T-cell (primary cell): ENCODE measurements at regions of chr9 and their contacts with region 1.

Region 1: GRCh38 chr9:21611896-21612295 is 129.8 kb upstream of the IFNE start:
- DNase-seq: peak in 24 of 35 experiments; percentile 1 to 42 (median 16)
- ATAC-seq: peak; percentile 72 to 95 (median 92)
- H3K4me3 ChIP-seq: no peak overlapping the region
- H3K4me3 Mint-ChIP-seq: peak overlapping the region; percentile 22 to 40 (median 39)
- H3K27ac ChIP-seq: no peak overlapping the region
- H3K27ac Mint-ChIP-seq: peak overlapping the region; percentile 70 to 81
- H3K4me1 ChIP-seq: peaks cover 23 to 34% of the 10 kb centered on the region in 2 experiments
- H3K4me1 Mint-ChIP-seq: peaks cover 50 to 63% (median 59%) of the 10 kb centered on the region in 3 donors
- H3K27me3 ChIP-seq: no peaks in the 10 kb centered on the region
- H3K27me3 Mint-ChIP-seq: no peaks in the 10 kb centered on the region

Region 2: DNA sequence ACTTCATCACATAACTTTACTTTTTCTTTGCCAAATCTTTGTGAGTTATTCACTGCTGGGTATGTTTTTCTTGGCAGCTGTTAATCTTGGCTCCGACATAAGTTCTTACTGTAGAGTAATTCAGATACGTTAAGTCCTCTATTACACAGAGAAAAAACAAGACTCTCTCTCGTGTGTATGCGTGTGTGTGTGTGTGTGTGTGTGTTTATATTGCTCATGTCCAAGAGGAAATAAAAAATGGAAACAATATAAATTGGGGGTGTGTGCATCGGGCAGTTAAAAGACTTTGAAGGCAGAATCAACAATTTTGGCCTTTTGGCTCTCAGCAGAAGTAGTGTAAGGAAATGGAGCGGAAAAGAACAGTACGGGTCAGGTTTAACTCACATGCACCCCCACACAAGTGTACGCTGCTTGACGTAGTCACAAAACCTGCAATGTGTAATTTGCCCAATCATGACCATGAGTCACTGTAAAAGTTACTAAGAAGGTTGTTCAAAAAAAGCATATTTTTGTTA is 62.6 kb before region 1 on chr9:
- CTCF ChIA-PET with region 1: no interaction called
- POLR2A ChIA-PET with region 1: no interaction called
- DNase-seq: no peak
- ATAC-seq: no peak
- H3K4me3 ChIP-seq: no peak overlapping the region
- H3K4me3 Mint-ChIP-seq: no peak overlapping the region
- H3K27ac ChIP-seq: no peak overlapping the region
- H3K27ac Mint-ChIP-seq: no peak overlapping the region
- H3K4me1 ChIP-seq: no peaks in the 10 kb centered on the region
- H3K4me1 Mint-ChIP-seq: peaks cover 8 to 18% (median 12%) of the 10 kb centered on the region in 3 donors
- H3K27me3 ChIP-seq: no peaks in the 10 kb centered on the region
- H3K27me3 Mint-ChIP-seq: peaks cover 3 to 12% of the 10 kb centered on the region in 2 donors

Region 3: DNA sequence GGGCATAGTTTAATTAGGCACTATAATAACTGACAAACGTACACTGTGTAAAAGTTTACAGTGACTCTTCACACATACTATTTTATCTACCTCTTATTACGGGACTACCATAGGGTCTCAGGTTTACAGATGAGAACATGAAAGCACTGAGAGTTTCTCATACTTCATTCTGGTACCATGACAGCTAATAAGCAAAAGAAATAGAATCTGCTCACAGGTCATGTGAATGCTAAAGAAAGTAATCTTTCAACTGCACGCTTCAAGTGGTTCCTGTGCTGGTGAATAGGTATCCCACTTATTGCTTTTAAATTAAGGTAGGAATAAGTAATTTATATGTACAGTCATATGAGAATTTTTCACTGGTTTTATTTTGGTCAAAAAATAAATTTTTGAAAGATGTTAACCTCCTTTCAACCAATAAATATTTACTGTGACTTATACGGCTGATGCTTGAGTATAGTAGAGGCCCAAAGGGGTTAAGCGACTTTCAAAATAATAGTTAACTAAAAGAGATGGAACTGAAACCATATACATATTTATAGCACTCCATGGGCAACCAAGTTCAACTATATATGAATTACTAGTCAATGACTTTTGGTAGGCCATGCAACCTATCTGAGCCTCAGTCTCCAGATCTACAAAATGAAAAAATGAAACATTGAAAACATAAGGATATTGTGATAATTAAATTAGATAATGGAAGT is 374.2 kb after region 1 on chr9:
- CTCF ChIA-PET with region 1: no interaction called
- POLR2A ChIA-PET with region 1: no interaction called
- DNase-seq: no peak
- ATAC-seq: no peak
- H3K4me3 ChIP-seq: no peak overlapping the region
- H3K4me3 Mint-ChIP-seq: no peak overlapping the region
- H3K27ac ChIP-seq: no peak overlapping the region
- H3K27ac Mint-ChIP-seq: no peak overlapping the region
- H3K4me1 ChIP-seq: peaks cover 0 to 2% of the 10 kb centered on the region in 2 experiments
- H3K4me1 Mint-ChIP-seq: peaks cover 0 to 7% (median 6%) of the 10 kb centered on the region in 3 donors
- H3K27me3 ChIP-seq: peaks cover 11 to 24% of the 10 kb centered on the region in 2 experiments
- H3K27me3 Mint-ChIP-seq: peaks cover 56 to 72% of the 10 kb centered on the region in 2 donors

Region 4: DNA sequence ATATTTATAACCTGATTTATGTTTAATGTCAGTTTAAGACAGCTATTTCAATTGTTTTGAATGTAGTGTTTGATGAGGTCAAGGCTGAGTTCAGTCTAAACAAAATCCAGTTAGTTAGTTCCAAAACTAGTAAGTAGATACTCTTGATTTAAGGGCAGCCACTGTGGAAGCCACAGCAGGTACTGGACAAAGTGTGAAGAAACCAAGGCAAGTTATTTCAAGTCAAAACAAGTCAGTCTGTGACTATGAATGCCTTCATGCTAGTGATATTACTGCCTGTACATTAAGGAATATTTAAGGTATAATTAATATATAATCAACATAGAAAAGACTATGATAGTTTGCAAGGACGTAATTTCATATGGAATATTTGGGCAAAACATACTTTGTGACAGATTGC is 1197.0 kb after region 1 on chr9:
- CTCF ChIA-PET with region 1: interaction called in 1 of 2 experiments, 13 read pairs
- POLR2A ChIA-PET with region 1: no interaction called
- DNase-seq: no peak
- ATAC-seq: no peak
- H3K4me3 ChIP-seq: no peak overlapping the region
- H3K4me3 Mint-ChIP-seq: no peak overlapping the region
- H3K27ac ChIP-seq: no peak overlapping the region
- H3K27ac Mint-ChIP-seq: no peak overlapping the region
- H3K4me1 ChIP-seq: no peaks in the 10 kb centered on the region
- H3K4me1 Mint-ChIP-seq: no peaks in the 10 kb centered on the region
- H3K27me3 ChIP-seq: no peaks in the 10 kb centered on the region
- H3K27me3 Mint-ChIP-seq: no peaks in the 10 kb centered on the region